ENCODE measurements at regions of chrX and their contacts with region 1.

Region 1: DNA sequence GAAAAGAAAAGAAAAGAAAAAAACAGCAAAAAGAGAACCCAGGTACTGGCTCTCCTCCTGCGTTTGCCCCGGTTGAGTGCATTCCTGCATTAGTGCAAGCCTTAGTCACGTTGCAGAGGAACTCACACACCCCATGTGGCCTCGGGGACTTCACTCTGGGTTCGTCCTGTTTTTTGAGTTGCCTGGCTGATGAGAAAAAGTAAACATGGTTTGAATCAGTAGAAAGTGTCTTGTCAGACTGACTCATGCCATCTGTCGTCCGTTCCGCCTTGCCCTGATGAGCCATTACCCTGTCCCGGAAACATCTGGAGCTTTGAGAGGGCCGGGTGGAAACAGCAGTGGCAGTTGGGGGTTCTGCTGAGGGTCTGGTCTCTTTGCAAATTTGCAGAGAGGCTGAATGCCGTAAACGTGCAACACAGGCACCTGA is 16.3 kb downstream of the CD99 start:
- DNase-seq: peak; percentile 94
- ATAC-seq: peak; percentile 75
- H3K4me3 ChIP-seq: peak overlapping the region; percentile 46; the same call in 1 of the 2 replicates
- H3K27ac ChIP-seq: peak overlapping the region; percentile 98
- H3K4me1 ChIP-seq: peaks cover 44% of the 10 kb centered on the region
- H3K27me3 ChIP-seq: no peaks in the 10 kb centered on the region
- CTCF ChIP-seq: no peak

Region 2: GRCh38 chrX:2627272-2627867 is 80.0 kb before region 1 on chrX:
- CTCF ChIA-PET with region 1: no interaction called
- POLR2A ChIA-PET with region 1: no interaction called
- intact Hi-C with region 1: no loop called
- DNase-seq: peak; percentile 55
- ATAC-seq: peak; percentile 55; the same call in 1 of the 2 replicates
- H3K4me3 ChIP-seq: no peak overlapping the region
- H3K27ac ChIP-seq: no peak overlapping the region
- H3K4me1 ChIP-seq: peaks cover 5% of the 10 kb centered on the region
- H3K27me3 ChIP-seq: no peaks in the 10 kb centered on the region
- CTCF ChIP-seq: peak; percentile 73

Region 3: DNA sequence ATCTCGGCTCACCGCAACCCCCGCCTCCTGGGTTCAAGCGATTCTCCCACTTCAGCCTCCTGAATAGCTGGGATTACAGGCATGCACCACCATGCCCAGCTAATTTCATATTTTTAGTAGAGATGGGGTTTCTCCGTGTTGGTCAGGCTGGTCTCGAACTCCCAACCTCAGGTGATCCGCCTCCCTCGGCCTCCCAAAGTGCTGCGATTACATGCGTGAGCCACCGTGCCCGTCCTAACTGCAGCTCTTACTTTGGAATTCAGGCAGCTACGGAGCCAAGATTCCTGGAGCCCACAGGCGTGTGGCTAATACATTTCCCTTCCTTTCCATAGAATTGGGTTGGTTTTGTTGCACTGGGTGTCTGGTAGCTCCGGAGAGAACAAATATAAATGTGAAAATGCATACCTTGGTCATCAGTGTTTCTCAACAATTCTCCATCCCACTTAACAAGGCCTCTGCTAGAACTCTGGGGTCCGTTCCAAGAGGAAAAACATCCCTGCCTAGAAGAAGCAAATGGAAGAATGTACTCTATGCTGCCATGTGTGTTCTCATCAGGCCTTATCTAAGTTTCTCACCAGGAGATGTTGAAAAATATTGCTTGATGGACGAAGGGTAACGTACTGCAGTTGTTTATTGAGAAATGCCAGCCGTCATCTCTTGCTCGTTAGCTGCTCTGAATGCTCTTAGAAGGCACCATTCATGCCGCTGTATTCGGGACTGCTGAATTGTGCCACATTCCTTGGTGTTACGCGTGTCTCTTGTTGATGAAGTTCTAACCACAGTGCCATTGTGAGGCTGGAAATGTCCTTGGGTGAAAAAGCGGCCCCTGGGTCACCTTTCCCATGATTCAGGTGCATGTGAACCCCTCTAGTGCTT is 66.8 kb before region 1 on chrX:
- CTCF ChIA-PET with region 1: no interaction called
- POLR2A ChIA-PET with region 1: no interaction called
- intact Hi-C with region 1: loop called (anchors 5 kb)
- DNase-seq: no peak
- ATAC-seq: no peak
- H3K4me3 ChIP-seq: no peak overlapping the region
- H3K27ac ChIP-seq: no peak overlapping the region
- H3K4me1 ChIP-seq: no peaks in the 10 kb centered on the region
- H3K27me3 ChIP-seq: no peaks in the 10 kb centered on the region
- CTCF ChIP-seq: no peak

Region 4: GRCh38 chrX:2677764-2678163 is 29.6 kb before region 1 on chrX:
- CTCF ChIA-PET with region 1: no interaction called
- POLR2A ChIA-PET with region 1: no interaction called
- intact Hi-C with region 1: loop called (anchors 5 kb)
- DNase-seq: peak; percentile 89
- ATAC-seq: peak; percentile 99
- H3K4me3 ChIP-seq: no peak overlapping the region
- H3K27ac ChIP-seq: no peak overlapping the region
- H3K4me1 ChIP-seq: peaks cover 10% of the 10 kb centered on the region
- H3K27me3 ChIP-seq: no peaks in the 10 kb centered on the region
- CTCF ChIP-seq: no peak

Region 5: DNA sequence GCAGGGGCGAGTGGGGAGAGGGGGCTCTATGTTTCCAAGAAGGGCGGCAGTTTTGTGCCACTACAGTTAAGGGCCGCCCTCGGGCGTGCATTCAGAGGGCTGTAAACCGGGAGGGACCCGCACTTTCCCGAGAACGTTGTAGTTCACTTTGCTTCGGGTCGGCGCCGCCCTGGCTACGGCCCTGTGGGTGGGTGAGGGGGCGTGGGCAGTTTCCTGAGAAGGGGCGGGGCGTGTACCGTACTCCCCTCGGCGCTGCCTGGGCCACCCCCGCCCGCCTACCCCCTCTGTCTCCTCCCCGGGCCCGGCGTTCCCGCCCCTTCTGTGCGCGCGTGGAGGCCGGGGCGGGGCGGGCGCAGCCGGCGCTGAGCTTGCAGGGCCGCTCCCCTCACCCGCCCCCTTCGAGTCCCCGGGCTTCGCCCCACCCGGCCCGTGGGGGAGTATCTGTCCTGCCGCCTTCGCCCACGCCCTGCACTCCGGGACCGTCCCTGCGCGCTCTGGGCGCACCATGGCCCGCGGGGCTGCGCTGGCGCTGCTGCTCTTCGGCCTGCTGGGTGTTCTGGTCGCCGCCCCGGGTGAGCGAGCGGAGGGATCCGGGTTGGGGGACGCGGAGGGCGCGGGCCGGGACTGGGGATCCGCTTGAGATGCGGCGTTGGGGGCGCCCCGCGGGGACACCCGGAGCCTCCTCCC is 16.3 kb before region 1 on chrX and contains the start of gene CD99:
- CTCF ChIA-PET with region 1: no interaction called
- POLR2A ChIA-PET with region 1: no interaction called
- intact Hi-C with region 1: loop called (anchors 1 kb)
- DNase-seq: peak; percentile 77
- ATAC-seq: peak; percentile 87
- H3K4me3 ChIP-seq: peak within 1 kb of the TSS; percentile 93
- H3K27ac ChIP-seq: peak within 1 kb of the TSS; percentile 58
- H3K4me1 ChIP-seq: peaks cover 8% of the 10 kb centered on the region
- H3K27me3 ChIP-seq: no peaks in the 10 kb centered on the region
- CTCF ChIP-seq: no peak
- total RNA-seq, gene CD99: 202 and 325 TPM in 2 replicates

Region 6: DNA sequence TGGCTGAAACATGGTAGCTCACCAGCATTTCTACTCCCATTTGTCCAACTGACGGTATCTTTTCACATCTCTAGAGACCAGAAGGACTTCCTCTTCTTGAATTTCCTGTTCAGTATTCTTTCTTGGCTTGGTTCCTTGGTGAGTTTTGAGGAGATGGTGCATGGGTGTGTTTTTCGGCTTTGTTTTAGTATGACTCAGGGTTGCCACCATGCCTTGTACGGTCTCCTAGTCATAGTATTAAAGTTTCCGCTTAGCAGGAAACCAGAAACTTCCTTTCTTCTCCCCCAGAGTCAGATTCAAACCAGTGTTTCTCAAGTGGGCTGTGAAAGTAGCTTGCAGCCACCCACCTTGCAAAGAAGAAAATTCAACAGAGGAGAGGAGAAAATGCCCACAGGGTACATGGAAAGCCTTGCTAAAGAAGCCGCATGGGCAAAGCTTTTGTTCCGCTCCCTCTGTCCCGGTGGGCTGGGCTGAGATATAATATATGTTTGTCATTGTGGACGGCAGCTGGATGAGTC is 10.6 kb before region 1 on chrX:
- CTCF ChIA-PET with region 1: no interaction called
- POLR2A ChIA-PET with region 1: no interaction called
- intact Hi-C with region 1: loop called (anchors 1 kb)
- DNase-seq: peak; percentile 90
- ATAC-seq: peak; percentile 83
- H3K4me3 ChIP-seq: peak overlapping the region; percentile 47; the same call in 1 of the 2 replicates
- H3K27ac ChIP-seq: peak overlapping the region; percentile 93
- H3K4me1 ChIP-seq: peaks cover 37% of the 10 kb centered on the region
- H3K27me3 ChIP-seq: no peaks in the 10 kb centered on the region
- CTCF ChIP-seq: no peak